Endothelial cell of umbilical vein (primary cell): ENCODE measurements at regions of chr7 and their contacts with region 1.

Region 1: DNA sequence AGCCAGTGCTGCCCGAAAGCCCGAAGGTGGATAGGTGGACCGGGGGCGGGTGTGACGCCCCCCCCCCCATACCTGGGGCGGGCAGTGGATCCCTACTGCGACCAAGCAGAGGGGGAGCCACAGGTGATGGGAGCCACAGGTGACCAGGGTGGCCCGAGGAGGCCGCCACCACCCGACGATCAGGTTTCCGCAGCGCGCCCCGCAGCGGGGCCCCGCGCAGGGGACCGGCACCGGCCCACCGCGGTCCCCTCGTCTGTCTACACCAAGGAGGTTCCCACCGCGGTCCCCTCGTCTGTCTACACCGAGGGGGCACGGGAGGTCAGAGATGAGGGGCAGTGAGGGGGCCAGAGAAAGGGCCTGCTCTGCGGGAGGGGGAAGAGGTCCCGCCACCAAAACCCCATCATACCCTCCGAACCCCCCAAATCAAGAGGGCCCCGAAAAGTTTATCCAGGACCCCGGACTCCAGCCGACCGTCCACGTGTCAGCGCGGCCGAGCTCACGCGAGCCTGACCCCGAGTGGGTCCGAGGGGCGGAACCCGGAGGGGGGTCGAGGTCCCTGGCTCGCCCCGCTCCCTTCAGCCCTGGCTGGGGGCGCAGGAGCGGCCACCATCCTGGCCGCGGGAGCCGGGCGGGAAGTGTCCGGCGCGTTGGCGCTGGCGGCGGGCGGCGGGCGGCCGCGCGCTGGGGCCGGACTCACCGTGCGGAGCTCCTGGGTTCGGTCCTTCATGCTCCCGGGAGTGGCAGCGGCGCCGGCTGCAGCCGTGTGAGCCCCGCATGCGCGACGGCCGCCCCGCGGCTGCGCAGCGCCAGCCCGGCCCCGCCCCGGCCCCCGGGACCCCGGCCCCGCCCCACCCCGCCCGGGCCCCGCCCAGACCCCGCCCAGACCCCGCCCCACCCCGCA is at the start of gene STX1A:
- DNase-seq: peak; percentile 55
- H3K4me3 ChIP-seq: peak within 1 kb of the TSS; percentile 42 to 66 (median 57)
- H3K27ac ChIP-seq: peak within 1 kb of the TSS; percentile 98
- H3K4me1 ChIP-seq: peaks cover 35% of the 10 kb centered on the region
- H3K27me3 ChIP-seq: no peaks in the 10 kb centered on the region
- CTCF ChIP-seq: no peak
- POLR2A ChIP-seq: peak; percentile 77
- total RNA-seq, gene STX1A: 16.8 and 20.8 TPM in 2 replicates

Region 2: GRCh38 chr7:73683056-73683964 is 35.8 kb before region 1 on chr7 and contains the starts of genes BUD23 and DNAJC30:
- CTCF ChIA-PET with region 1: no interaction called
- POLR2A ChIA-PET with region 1: no interaction called
- dilution Hi-C with region 1: no loop called
- intact Hi-C with region 1: loop called (anchors 1 kb)
- DNase-seq: peak; percentile 94
- H3K4me3 ChIP-seq: peak within 1 kb of the TSS; percentile 65 to 88 (median 81)
- H3K27ac ChIP-seq: peak within 1 kb of the TSS; percentile 77
- H3K4me1 ChIP-seq: peaks cover 14% of the 10 kb centered on the region
- H3K27me3 ChIP-seq: no peaks in the 10 kb centered on the region
- CTCF ChIP-seq: no peak
- POLR2A ChIP-seq: peak; percentile 93
- total RNA-seq, gene BUD23: 60.1 and 64.6 TPM in 2 replicates
- total RNA-seq, gene DNAJC30: 10.4 and 11.9 TPM in 2 replicates

Region 3: DNA sequence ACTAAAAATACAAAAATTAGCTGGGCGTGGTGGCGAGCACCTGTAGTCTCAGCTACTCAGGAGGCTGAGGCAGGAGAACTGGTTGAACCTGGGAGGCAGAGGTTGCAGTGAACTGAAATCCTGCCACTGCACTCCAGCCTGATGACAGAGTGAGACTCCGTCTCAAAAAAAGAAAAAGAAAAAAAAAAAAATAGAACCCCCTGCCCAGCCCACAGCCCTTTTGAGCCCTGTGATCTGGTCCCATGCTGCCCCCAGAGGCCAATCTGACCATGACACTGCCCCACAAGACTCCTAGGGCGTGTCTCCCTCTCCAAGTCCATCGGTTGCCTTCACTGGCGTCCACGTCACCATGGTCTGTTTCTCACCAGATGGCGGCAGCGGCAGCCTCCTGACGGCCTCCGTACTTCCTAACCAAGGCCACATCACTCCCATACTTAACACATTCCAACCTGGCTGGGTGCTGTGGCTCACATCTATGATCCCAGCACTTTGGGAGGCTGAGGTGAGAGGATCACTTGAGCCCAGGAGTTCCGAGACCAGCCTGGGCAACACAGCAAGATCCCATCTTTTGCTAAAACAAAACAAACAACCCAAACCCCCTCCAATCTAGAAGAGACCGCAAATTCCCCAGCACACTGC is 17.7 kb before region 1 on chr7:
- CTCF ChIA-PET with region 1: interaction called, 26 read pairs
- POLR2A ChIA-PET with region 1: interaction called, 3 read pairs
- dilution Hi-C with region 1: no loop called
- intact Hi-C with region 1: no loop called
- DNase-seq: peak; percentile 46
- H3K4me3 ChIP-seq: no peak overlapping the region
- H3K27ac ChIP-seq: no peak overlapping the region
- H3K4me1 ChIP-seq: no peaks in the 10 kb centered on the region
- H3K27me3 ChIP-seq: no peaks in the 10 kb centered on the region
- CTCF ChIP-seq: peak; percentile 54 to 68
- POLR2A ChIP-seq: no peak

Region 4: GRCh38 chr7:73707142-73707595 is 12.0 kb before region 1 on chr7:
- CTCF ChIA-PET with region 1: interaction called, 26 read pairs
- POLR2A ChIA-PET with region 1: interaction called, 3 read pairs
- dilution Hi-C with region 1: no loop called
- intact Hi-C with region 1: loop called (anchors 1 kb)
- DNase-seq: no peak
- H3K4me3 ChIP-seq: no peak overlapping the region
- H3K27ac ChIP-seq: no peak overlapping the region
- H3K4me1 ChIP-seq: peaks cover 9% of the 10 kb centered on the region
- H3K27me3 ChIP-seq: no peaks in the 10 kb centered on the region
- CTCF ChIP-seq: no peak
- POLR2A ChIP-seq: no peak

Region 5: GRCh38 chr7:73792594-73793292 is 73.6 kb after region 1 on chr7:
- CTCF ChIA-PET with region 1: no interaction called
- POLR2A ChIA-PET with region 1: no interaction called
- dilution Hi-C with region 1: no loop called
- intact Hi-C with region 1: no loop called
- DNase-seq: no peak
- H3K4me3 ChIP-seq: no peak overlapping the region
- H3K27ac ChIP-seq: no peak overlapping the region
- H3K4me1 ChIP-seq: no peaks in the 10 kb centered on the region
- H3K27me3 ChIP-seq: peaks cover 0 to 2% of the 10 kb centered on the region in 2 experiments
- CTCF ChIP-seq: no peak
- POLR2A ChIP-seq: no peak

Region 6: GRCh38 chr7:73851410-73852234 is 132.5 kb after region 1 on chr7:
- CTCF ChIA-PET with region 1: no interaction called
- POLR2A ChIA-PET with region 1: no interaction called
- dilution Hi-C with region 1: no loop called
- intact Hi-C with region 1: loop called (anchors 1 kb)
- DNase-seq: peak; percentile 97
- H3K4me3 ChIP-seq: no peak overlapping the region
- H3K27ac ChIP-seq: peak overlapping the region; percentile 93
- H3K4me1 ChIP-seq: peaks cover 16% of the 10 kb centered on the region
- H3K27me3 ChIP-seq: no peaks in the 10 kb centered on the region
- CTCF ChIP-seq: no peak
- POLR2A ChIP-seq: peak; percentile 39